HCT116 (cell line): ENCODE measurements at regions of chr6 and their contacts with region 1.

Region 1: GRCh38 chr6:48765352-48765961 is 654.5 kb upstream of the PTCHD4 start:
- DNase-seq: peak; percentile 59
- ATAC-seq: peak; percentile 87
- H3K4me3 ChIP-seq: no peak overlapping the region
- H3K27ac ChIP-seq: no peak overlapping the region; the same call in 1 of the 2 replicates
- H3K4me1 ChIP-seq: peaks cover 5 to 22% of the 10 kb centered on the region in 2 experiments; a peak in 3 of 4 replicates
- H3K27me3 ChIP-seq: no peaks in the 10 kb centered on the region
- CTCF ChIP-seq: peak; percentile 56 to 73 (median 66)
- POLR2A ChIP-seq: no peak
- RAD21 ChIP-seq: peak; percentile 86

Region 2: GRCh38 chr6:48087448-48087847 is 678.0 kb before region 1 on chr6:
- CTCF ChIA-PET with region 1: interaction called, 23 read pairs
- POLR2A ChIA-PET with region 1: no interaction called
- RAD21 ChIA-PET with region 1: interaction called in 1 of 2 experiments, 3 read pairs
- intact Hi-C with region 1: loop called (anchors 5 kb)
- DNase-seq: peak; percentile 18
- ATAC-seq: no peak
- H3K4me3 ChIP-seq: no peak overlapping the region
- H3K27ac ChIP-seq: no peak overlapping the region
- H3K4me1 ChIP-seq: no peaks in the 10 kb centered on the region
- H3K27me3 ChIP-seq: no peaks in the 10 kb centered on the region
- CTCF ChIP-seq: peak; percentile 25 to 50 (median 48); a peak in 4 of 6 replicates
- POLR2A ChIP-seq: no peak
- RAD21 ChIP-seq: peak; percentile 70

Region 3: GRCh38 chr6:48318670-48319069 is 446.8 kb before region 1 on chr6:
- CTCF ChIA-PET with region 1: no interaction called
- POLR2A ChIA-PET with region 1: no interaction called
- RAD21 ChIA-PET with region 1: no interaction called
- intact Hi-C with region 1: no loop called
- DNase-seq: no peak
- ATAC-seq: no peak
- H3K4me3 ChIP-seq: no peak overlapping the region
- H3K27ac ChIP-seq: no peak overlapping the region
- H3K4me1 ChIP-seq: no peaks in the 10 kb centered on the region
- H3K27me3 ChIP-seq: no peaks in the 10 kb centered on the region
- CTCF ChIP-seq: no peak
- POLR2A ChIP-seq: no peak
- RAD21 ChIP-seq: no peak

Region 4: GRCh38 chr6:48782230-48782629 is 16.8 kb after region 1 on chr6:
- CTCF ChIA-PET with region 1: no interaction called
- POLR2A ChIA-PET with region 1: no interaction called
- RAD21 ChIA-PET with region 1: no interaction called
- intact Hi-C with region 1: no loop called
- DNase-seq: no peak
- ATAC-seq: no peak
- H3K4me3 ChIP-seq: no peak overlapping the region
- H3K27ac ChIP-seq: no peak overlapping the region
- H3K4me1 ChIP-seq: no peaks in the 10 kb centered on the region
- H3K27me3 ChIP-seq: no peaks in the 10 kb centered on the region
- CTCF ChIP-seq: no peak
- POLR2A ChIP-seq: no peak
- RAD21 ChIP-seq: no peak

Region 5: DNA sequence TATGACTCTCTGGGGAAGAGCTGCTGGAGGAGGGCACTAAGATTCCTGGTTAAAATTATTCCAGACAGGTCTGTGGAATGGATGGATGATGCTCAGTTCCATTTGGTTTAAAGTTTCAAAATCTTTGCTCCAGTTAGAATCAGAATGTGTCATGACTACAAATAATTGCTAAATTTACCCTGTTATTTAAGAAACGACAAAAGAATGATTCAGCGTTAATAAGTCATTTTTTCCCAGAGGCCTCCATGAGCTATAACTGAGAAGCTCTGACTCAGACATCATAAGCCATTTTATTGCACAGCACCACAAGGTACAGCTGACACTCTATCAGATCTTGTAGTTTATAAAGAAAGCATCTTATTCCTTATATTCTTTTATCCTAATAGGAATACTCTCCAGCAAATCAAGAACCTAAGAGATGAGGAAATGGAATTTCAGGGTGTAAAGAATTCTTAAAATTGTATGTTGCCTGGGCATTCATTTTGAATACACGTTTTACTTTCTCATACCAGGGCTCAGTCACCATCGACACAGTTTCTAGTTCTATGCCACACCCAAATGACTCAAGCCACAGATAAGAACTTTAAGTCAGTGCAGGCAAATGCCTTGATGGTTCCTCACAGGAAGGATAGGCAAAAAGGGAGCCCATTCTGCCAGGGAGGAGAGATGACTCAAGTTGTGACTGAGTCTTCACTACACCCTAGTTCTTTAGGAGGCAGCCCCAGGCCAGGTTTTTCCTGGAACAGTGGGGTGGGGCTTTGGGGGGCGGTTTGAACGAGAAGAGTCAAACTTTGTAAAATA is 61.6 kb after region 1 on chr6:
- CTCF ChIA-PET with region 1: no interaction called
- POLR2A ChIA-PET with region 1: no interaction called
- RAD21 ChIA-PET with region 1: no interaction called
- intact Hi-C with region 1: loop called (anchors 2 kb)
- DNase-seq: peak; percentile 99
- ATAC-seq: peak; percentile 94
- H3K4me3 ChIP-seq: peak overlapping the region; percentile 16 to 45
- H3K27ac ChIP-seq: peak overlapping the region; percentile 98
- H3K4me1 ChIP-seq: peaks cover 29 to 46% of the 10 kb centered on the region in 2 experiments
- H3K27me3 ChIP-seq: no peaks in the 10 kb centered on the region
- CTCF ChIP-seq: no peak
- POLR2A ChIP-seq: no peak
- RAD21 ChIP-seq: peak; percentile 46